ENCODE measurements at regions of chr17 and their contacts with region 1.

Region 1: DNA sequence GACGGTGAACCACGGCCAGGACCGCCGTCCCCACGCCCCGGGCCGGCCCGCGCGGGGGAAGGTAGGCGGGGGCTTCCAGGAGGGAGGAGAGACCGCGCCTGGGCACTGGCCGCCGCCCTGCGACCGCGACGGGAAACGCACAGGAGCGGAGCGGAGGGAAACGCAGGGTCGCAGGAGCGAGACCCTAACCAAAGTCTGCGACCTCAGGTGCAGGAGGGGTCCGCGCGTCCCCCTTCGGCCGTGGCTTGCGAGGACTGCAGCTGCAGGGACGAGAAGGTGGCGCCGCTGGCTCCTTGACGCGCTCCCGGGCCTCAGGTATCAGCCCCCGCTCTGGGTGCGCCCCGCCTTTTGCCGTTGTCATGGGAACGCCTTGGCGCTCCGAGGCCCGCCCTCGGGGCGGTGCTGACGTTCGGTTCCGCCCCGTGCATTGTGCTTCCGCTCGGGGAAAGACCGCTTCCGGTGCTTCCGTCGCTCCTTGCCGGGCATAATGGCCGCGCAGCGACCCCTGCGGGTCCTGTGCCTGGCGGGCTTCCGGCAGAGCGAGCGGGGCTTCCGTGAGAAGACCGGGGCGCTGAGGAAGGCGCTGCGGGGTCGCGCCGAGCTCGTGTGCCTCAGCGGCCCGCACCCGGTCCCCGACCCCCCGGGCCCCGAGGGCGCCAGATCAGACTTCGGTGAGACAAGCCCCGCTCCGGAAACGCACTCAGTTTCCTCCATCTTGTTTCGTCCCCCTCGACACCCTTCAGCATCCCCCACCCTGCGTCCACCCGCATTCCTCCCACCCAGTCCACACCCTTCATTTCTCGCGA is at the start of gene OVCA2:
- DNase-seq: peak; percentile 97
- H3K4me3 ChIP-seq: peak within 1 kb of the TSS; percentile 60 to 79 (median 72)
- H3K27ac ChIP-seq: peak within 1 kb of the TSS; percentile 82 to 94 (median 88)
- H3K4me1 ChIP-seq: peaks cover 0 to 31% (median 30%) of the 10 kb centered on the region in 4 donors
- H3K27me3 ChIP-seq: no peaks in the 10 kb centered on the region
- CTCF ChIP-seq: peak in 3 of 4 experiments; percentile 16 to 42 (median 30)
- EP300 ChIP-seq: no peak
- POLR2A ChIP-seq: peak in 1 of 2 donors; percentile 21
- total RNA-seq, gene OVCA2: 26.3 to 43.0 (median 32.9) TPM

Region 2: DNA sequence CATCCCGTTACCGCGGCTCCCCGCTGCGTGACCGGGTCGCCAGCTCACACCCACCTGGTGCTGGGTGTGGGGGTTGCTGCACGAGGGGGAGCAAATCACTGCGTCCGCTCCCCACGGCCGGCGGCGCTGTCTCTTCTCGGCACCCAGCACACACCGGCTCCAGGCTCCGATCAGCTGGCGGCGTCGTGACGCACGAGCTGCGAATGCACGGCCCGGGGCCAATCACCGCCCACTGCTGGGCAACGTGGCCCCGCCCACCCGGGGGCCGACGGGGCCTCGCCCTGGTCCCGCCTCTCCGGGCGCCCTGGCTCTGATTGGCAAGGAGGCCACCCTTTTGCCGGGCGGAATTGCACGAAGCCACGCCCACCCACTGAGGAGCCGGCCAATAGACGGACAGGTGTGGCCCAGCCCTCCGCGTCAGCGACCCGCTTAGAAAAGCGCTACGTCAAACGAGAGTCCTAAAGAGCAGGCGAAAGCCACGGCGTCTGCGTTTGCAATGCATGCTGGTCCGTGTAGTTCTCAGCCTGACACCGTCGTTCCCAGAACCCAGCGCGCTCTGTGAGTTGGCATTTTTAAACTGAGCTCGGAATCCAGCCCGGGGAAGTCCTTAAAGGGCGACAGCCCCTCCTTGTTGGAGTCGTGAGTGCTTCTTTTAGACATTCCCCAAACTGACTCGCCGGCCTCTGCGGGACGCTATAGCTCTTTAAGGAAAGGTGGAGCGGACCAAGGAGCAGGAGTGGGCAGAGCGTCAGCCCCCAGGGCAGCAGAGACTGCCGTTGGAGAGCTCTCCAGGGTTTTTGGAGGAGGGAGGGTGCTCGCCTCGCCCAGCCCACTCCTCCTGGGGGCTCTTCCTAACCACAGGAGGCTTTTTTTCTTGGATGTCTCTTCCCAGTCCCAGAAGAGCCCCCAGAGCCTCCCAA is 325.4 kb before region 1 on chr17:
- intact Hi-C with region 1: loop called (anchors 5 kb)
- DNase-seq: peak; percentile 100
- H3K4me3 ChIP-seq: peak overlapping the region; percentile 73 to 99 (median 90)
- H3K27ac ChIP-seq: peak overlapping the region; percentile 99 to 100 (median 100)
- H3K4me1 ChIP-seq: peaks cover 0 to 49% (median 39%) of the 10 kb centered on the region in 4 donors
- H3K27me3 ChIP-seq: no peaks in the 10 kb centered on the region
- CTCF ChIP-seq: no peak
- EP300 ChIP-seq: peak in 1 of 4 donors; percentile 94
- POLR2A ChIP-seq: peak; percentile 100

Region 3: DNA sequence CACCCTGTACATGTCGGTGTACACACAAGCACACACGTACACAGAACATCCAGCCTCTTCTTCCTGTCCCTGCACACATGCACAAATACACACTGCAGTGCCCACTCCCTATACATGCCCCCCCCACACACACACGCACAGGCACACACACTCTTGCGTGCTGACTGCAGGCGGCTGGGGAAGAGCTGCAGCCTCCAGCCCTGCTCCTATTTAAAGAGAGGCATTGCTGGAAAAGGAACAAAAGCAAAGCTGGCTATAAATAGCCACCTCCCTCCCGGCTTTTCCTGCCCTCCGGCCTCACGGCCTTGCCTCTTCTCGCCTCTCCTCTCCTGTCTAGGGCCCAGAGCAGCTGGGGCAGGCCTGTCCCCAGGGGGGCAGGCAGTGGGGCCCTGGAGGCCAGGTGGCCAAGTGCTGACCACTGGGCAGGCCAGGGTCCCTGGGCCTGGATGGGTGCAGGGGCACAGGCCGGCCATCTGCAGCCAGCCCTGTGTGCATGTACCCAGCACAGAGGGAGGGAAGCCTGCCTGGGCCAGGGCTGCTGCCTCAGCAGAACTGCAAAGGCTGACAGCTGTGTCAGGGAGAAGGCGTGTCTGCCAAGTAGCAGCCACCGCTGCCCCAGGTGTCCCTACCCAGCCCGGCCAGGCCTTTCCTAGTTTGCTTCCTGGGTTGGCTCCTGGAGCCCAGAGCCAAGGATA is 42.1 kb before region 1 on chr17:
- intact Hi-C with region 1: no loop called
- DNase-seq: peak; percentile 78
- H3K4me3 ChIP-seq: no peak overlapping the region
- H3K27ac ChIP-seq: peak overlapping the region; percentile 73 to 90 (median 82)
- H3K4me1 ChIP-seq: peaks cover 0 to 35% (median 29%) of the 10 kb centered on the region in 4 donors
- H3K27me3 ChIP-seq: no peaks in the 10 kb centered on the region
- CTCF ChIP-seq: no peak
- EP300 ChIP-seq: no peak
- POLR2A ChIP-seq: no peak

Measured in sigmoid colon (tissue), 7 donors.